ENCODE measurements at regions of chr17 and their contacts with region 1.

Region 1: DNA sequence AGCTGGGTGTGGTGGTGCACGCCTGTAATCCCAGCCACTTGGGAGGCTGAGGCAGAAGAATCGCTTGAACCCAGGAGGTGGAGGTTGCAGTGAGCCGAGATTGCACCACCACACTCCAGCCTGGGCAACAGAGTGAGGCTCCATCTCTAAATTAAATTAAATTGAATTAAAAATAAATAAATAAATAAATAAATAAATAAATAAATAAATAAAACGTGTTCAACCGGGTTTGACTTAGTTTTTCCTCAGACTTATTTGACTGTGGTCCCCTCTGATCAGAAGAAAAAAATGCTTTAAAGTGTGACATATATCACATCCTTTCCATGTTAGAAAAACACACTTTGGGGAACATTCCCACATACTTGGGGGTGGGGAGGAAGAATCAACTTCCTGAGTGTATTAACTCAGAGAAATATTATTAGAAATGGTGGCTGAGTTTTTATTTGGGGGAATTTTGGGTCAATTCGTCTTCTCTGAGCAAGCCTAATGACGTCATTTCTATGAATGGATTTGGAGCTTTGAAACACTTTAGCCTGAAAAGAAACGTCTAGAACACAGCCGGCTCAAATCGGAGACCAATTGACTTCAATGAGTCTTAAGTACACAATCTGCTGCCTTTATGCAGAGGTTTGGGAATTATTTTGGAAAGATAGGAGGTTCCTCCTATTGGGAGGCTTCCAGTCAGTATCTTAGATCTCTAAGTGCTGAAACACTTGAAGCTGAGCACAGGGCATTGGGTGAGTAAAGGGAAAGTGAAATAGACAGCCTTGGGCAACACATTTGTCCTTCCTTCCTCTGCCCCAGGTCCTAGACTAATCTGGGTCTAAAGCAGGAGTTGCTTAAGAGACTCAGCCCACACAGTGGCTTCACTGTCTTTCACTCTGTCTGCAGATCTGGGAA is 132.6 kb downstream of the PITPNC1 start:
- DNase-seq: no peak
- H3K4me3 Mint-ChIP-seq: no peak overlapping the region
- H3K27ac Mint-ChIP-seq: no peak overlapping the region
- H3K4me1 Mint-ChIP-seq: peaks cover 11% of the 10 kb centered on the region
- H3K27me3 Mint-ChIP-seq: no peaks in the 10 kb centered on the region

Region 2: GRCh38 chr17:67183531-67183930 is 326.1 kb before region 1 on chr17:
- intact Hi-C with region 1: no loop called
- DNase-seq: no peak
- H3K4me3 Mint-ChIP-seq: no peak overlapping the region
- H3K27ac Mint-ChIP-seq: no peak overlapping the region
- H3K4me1 Mint-ChIP-seq: peaks cover 5% of the 10 kb centered on the region
- H3K27me3 Mint-ChIP-seq: no peaks in the 10 kb centered on the region

Region 3: GRCh38 chr17:67602956-67603355 is 93.3 kb after region 1 on chr17:
- intact Hi-C with region 1: loop called (anchors 10 kb)
- DNase-seq: peak; percentile 86
- H3K4me3 Mint-ChIP-seq: no peak overlapping the region
- H3K27ac Mint-ChIP-seq: no peak overlapping the region
- H3K4me1 Mint-ChIP-seq: peaks cover 6% of the 10 kb centered on the region
- H3K27me3 Mint-ChIP-seq: no peaks in the 10 kb centered on the region

Region 4: DNA sequence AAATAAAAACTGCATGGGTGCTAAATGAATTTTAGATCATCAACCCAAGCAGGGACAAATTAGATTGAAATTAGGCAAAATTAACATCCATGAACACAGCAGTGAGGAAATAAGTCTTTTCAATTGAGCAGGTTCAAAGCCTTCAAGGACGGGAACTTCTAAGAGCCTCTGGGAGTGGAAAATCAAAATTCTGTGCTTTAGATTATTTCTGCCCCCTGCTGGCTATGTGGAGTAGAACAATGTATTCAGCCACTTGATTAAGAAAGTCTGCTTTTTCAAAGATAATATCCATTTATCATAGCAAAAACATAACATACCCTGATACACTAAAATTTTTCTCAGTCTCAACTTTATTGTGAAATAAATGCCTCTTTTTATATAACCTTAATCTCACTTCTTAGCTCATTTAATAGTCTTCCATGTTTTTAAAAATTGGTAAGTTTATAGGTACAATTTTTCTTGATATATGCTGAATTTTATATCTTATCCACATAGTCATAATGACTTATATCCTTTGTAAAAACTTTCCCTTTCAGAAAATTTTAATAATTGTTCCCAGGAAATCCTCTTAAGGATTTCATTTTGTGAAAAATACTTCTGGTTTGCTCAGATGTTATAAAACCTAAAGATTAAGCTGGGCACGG is 180.0 kb after region 1 on chr17:
- intact Hi-C with region 1: no loop called
- DNase-seq: peak; percentile 87
- H3K4me3 Mint-ChIP-seq: no peak overlapping the region
- H3K27ac Mint-ChIP-seq: no peak overlapping the region
- H3K4me1 Mint-ChIP-seq: peaks cover 4% of the 10 kb centered on the region
- H3K27me3 Mint-ChIP-seq: no peaks in the 10 kb centered on the region

Measured in activated CD4-positive, alpha-beta T cell treated with anti-CD3 and anti-CD28 coated beads, Interleukin-2, amount 10 ng/mL, durations not matched to agents 24 days and 14 days (primary cell).